Colonic mucosa (tissue), 4 donors: ENCODE measurements at regions of chr20 and their contacts with region 1.

Region 1: DNA sequence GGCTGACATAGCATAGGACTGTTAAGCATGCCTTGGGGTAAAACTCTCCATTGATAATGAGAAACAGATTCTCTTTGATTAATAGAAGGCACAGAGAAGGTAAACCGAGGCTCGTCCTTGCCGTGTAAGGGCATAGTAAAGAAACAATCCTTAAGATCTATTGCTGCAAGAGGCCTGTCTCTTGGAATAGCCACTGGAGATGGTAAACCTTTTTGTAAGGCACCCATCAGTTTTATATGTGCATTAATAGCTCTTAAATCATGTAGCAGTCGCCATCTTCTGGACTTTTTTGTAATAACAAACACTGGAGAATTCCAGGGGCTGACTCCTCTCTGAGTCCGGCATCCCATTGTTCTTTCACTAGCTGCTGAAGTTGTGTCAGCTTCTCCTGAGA is 8.4 kb upstream of the ABHD12 start:
- DNase-seq: peak; percentile 56
- H3K4me3 ChIP-seq: no peak overlapping the region
- H3K27ac ChIP-seq: peak overlapping the region; percentile 23
- H3K4me1 ChIP-seq: no peaks in the 10 kb centered on the region
- H3K27me3 ChIP-seq: no peaks in the 10 kb centered on the region
- CTCF ChIP-seq: peak; percentile 50

Region 2: DNA sequence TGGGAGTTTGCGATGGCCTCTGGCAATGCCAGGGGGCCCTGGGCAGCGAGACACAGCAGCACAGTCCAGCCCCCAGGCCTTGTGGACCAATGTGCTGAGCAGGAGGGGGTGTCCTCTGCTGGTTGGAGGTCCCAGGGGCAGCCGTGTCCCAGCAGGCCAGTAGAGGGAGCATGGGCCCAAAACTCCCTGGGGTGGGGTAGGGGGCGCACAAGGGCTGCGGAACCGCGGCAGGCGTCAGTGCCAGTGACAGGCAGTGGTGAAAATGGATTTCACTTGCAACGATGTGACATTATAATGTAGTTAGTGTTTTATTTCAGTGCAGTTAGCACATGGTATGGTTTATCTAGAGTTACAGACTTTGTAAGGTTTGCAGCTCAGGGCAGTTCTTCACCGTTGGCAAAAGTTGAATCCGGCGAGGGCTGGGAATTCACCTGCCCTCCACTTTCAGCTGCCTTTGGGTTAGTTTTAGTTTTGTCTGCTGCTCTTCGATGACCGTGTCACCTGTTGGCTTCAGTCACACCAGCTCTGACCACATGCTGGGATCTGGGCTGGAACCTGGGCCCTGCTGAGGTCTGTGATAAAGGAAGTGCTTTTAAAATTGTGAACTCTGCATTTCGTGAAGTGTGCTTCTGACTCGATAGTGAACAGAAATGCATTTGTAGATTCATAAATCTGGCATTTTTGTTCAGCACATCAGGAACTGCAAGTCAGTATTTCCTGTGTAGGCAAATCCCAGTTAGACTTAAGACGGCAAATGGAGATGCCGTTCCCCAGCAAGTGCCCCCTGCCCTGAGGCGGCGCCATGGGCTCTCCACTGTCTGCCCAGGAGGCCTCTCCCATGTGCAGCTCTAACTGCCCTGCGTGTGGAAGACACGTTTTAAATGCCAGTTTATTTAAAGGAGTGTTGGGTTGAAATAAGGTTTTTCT is 104.3 kb before region 1 on chr20:
- intact Hi-C with region 1: loop called (anchors 5 kb)
- DNase-seq: peak; percentile 54
- H3K4me3 ChIP-seq: no peak overlapping the region
- H3K27ac ChIP-seq: no peak overlapping the region
- H3K4me1 ChIP-seq: no peaks in the 10 kb centered on the region
- H3K27me3 ChIP-seq: no peaks in the 10 kb centered on the region
- CTCF ChIP-seq: peak; percentile 41